ENCODE measurements at regions of chr19 and their contacts with region 1.

Region 1: DNA sequence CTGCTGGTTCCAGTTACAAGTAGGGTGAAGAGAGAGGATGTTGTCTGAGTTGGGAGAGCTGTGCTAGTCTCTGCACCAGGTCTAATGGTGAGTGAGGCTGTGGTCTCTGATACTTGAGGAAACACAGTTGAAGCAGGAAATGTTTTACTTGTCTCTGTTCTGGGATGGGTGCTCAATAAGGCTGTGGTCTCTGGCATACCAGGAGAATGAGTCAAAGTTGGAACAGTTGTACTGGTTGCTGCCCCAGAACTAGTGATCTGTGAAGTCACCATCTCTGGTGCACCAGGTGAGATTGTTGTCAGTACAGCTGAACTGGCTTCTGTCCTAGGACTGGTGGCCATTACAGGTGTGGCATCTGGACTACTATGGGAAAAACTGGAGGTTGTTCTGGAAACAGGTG is 74.7 kb downstream of the MUC16 start:
- DNase-seq: no peak
- H3K4me3 ChIP-seq: no peak overlapping the region
- H3K27ac ChIP-seq: no peak overlapping the region
- H3K4me1 ChIP-seq: no peaks in the 10 kb centered on the region
- H3K27me3 ChIP-seq: no peaks in the 10 kb centered on the region
- CTCF ChIP-seq: no peak

Region 2: DNA sequence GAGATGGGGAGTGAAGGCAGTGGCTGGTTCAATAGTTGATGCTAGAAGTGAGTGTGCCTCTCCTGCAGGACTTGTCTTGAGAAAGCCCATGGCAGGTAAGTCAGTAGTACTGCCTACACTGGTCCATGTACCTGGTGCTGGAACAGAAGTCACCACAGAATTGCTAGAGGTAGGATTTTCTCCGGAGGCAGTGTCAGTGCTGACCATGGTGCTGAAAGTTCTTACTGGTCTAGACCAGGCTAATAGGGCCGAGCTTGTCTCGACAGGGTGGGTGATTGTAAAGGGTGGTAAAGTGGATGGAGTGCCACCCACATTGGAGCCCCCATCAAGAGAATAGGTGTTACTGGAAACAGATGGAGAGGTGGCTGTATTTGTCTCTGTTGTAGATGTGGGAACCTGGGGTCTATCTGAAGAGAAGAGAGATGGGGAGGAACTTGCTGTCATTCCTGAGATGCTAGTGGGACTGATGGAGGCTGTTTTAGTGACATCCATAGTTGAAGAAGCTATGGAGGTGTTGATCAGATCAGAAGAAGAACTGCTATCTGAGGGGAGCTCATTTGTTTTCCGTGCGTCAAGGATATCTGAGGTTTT is 38.1 kb after region 1 on chr19:
- CTCF ChIA-PET with region 1: no interaction called
- dilution Hi-C with region 1: loop called (anchors 5 kb)
- in situ Hi-C with region 1: no loop called
- intact Hi-C with region 1: no loop called
- DNase-seq: no peak
- H3K4me3 ChIP-seq: no peak overlapping the region
- H3K27ac ChIP-seq: no peak overlapping the region
- H3K4me1 ChIP-seq: no peaks in the 10 kb centered on the region
- H3K27me3 ChIP-seq: no peaks in the 10 kb centered on the region
- CTCF ChIP-seq: no peak

Region 3: DNA sequence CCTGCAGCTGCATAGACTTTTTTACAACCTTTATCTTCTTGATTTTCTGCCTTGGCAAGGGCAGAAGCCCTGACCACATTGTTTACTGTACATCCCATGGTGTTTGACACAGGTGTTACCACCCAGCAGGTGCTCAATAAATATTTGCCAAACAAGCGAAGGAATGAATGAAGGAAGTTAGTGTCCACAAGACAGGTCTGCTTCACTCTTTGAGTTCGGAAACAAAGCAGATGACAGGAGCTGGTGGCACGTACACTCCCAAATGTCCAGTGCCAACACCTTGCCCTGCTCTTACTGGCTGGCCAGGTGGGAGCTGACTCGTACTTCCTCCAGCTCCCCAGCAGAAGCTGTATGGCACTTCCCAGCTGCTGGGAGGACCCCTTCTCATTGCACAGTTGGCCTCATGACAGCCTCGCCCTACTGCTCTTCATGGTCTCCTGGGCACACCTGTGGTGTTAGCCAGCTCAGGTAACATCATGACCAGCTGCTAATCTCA is 96.7 kb after region 1 on chr19:
- CTCF ChIA-PET with region 1: no interaction called
- dilution Hi-C with region 1: loop called (anchors 5 kb)
- in situ Hi-C with region 1: no loop called
- intact Hi-C with region 1: no loop called
- DNase-seq: no peak
- H3K4me3 ChIP-seq: no peak overlapping the region
- H3K27ac ChIP-seq: no peak overlapping the region
- H3K4me1 ChIP-seq: no peaks in the 10 kb centered on the region
- H3K27me3 ChIP-seq: no peaks in the 10 kb centered on the region
- CTCF ChIP-seq: no peak

Region 4: GRCh38 chr19:9171393-9171991 is 236.0 kb after region 1 on chr19:
- CTCF ChIA-PET with region 1: no interaction called
- dilution Hi-C with region 1: no loop called
- in situ Hi-C with region 1: no loop called
- intact Hi-C with region 1: no loop called
- DNase-seq: no peak
- H3K4me3 ChIP-seq: no peak overlapping the region
- H3K27ac ChIP-seq: no peak overlapping the region
- H3K4me1 ChIP-seq: no peaks in the 10 kb centered on the region
- H3K27me3 ChIP-seq: no peaks in the 10 kb centered on the region
- CTCF ChIP-seq: no peak

Region 5: GRCh38 chr19:9183000-9183399 is 247.5 kb after region 1 on chr19:
- CTCF ChIA-PET with region 1: no interaction called
- dilution Hi-C with region 1: no loop called
- in situ Hi-C with region 1: no loop called
- intact Hi-C with region 1: no loop called
- DNase-seq: no peak
- H3K4me3 ChIP-seq: no peak overlapping the region
- H3K27ac ChIP-seq: no peak overlapping the region
- H3K4me1 ChIP-seq: no peaks in the 10 kb centered on the region
- H3K27me3 ChIP-seq: no peaks in the 10 kb centered on the region
- CTCF ChIP-seq: no peak

Measured in mammary epithelial cell (primary cell).